Dendritic cell treated with granulocyte-macrophage colony-stimulating factor and Interleukin-4, amounts not matched to agents 40 ng/mL and 50 ng/mL, for 4 days (primary cell): ENCODE measurements at regions of chr9 and their contacts with region 1.

Region 1: GRCh38 chr9:70413798-70414775 is at the start of gene KLF9:
- H3K4me3 Mint-ChIP-seq: peak within 1 kb of the TSS; percentile 97
- H3K27ac Mint-ChIP-seq: peak within 1 kb of the TSS; percentile 100
- H3K4me1 Mint-ChIP-seq: peaks cover 39% of the 10 kb centered on the region
- H3K27me3 Mint-ChIP-seq: no peaks in the 10 kb centered on the region

Region 2: GRCh38 chr9:70258692-70259511 is 155.2 kb before region 1 on chr9 and contains the start of gene SMC5:
- intact Hi-C with region 1: loop called (anchors 5 kb)
- H3K4me3 Mint-ChIP-seq: peak within 1 kb of the TSS; percentile 85
- H3K27ac Mint-ChIP-seq: peak within 1 kb of the TSS; percentile 95
- H3K4me1 Mint-ChIP-seq: peaks cover 51% of the 10 kb centered on the region
- H3K27me3 Mint-ChIP-seq: no peaks in the 10 kb centered on the region

Region 3: GRCh38 chr9:70374962-70375618 is 39.0 kb before region 1 on chr9:
- intact Hi-C with region 1: no loop called
- H3K4me3 Mint-ChIP-seq: no peak overlapping the region
- H3K27ac Mint-ChIP-seq: peak overlapping the region; percentile 57
- H3K4me1 Mint-ChIP-seq: peaks cover 8% of the 10 kb centered on the region
- H3K27me3 Mint-ChIP-seq: peaks cover under 1% of the 10 kb centered on the region

Region 4: DNA sequence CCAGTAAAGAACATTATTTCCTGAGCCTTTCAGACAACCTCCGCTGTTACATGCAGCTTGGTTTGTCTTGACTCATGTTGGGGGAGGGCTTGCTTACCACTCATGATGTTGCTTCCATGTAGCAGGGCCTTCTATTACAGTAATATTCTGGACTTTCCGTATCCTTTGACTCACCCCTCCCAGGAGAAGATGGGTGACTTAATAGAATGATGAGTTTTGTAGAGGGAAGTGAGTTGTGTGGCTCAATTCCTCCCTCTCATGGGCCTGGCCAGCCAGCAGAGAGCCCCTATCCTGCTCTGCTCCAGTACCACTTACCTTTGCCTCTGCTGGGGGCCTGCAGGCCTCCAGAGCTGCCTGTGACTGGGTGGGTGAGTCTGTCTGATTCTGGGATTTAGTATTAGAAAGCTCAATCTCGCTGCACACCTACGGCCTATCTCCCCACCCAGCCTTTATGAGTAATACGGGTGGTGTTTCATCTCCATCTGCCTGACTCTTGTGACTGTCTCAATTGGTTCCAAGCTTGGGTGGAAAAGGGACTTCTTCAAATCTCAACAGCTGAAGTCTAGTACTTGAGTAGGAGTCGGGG is 53.0 kb after region 1 on chr9:
- intact Hi-C with region 1: loop called (anchors 10 kb)
- H3K4me3 Mint-ChIP-seq: no peak overlapping the region
- H3K27ac Mint-ChIP-seq: peak overlapping the region; percentile 82
- H3K4me1 Mint-ChIP-seq: peaks cover 60% of the 10 kb centered on the region
- H3K27me3 Mint-ChIP-seq: no peaks in the 10 kb centered on the region

Region 5: DNA sequence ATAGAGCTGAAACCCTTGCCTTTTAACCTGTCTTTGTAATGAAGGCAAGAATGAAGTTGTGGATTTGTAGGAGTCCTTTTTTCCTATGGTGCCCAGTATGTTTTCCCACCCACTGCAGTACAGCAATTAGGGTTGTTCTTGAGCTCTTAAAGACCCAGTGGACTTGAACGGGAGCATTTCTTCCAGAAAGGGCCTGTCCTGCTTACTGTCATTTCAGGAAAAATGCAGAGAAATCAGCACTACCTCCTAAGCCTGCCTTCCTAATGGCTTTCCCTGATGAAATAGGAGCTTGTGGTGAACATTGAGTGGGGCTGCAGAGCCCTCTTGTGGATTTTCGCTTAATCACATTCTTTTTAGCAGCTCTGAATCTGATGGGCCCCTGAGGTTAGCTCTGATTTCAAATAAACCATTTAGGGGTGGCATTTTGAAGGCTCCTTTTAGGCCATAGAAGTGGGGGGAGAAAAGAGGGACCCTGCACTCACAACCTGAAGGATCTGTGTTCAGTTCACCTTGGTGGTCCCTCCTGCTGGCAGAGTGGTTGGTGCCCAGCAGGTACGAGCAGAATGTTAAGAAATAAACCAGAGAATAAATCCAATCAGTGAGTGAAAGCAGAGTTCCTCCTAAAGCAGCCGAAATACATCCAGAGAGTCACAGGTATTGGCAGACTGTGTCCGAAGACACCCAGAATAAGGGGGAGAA is 188.4 kb after region 1 on chr9:
- intact Hi-C with region 1: loop called (anchors 5 kb)
- H3K4me3 Mint-ChIP-seq: no peak overlapping the region
- H3K27ac Mint-ChIP-seq: no peak overlapping the region
- H3K4me1 Mint-ChIP-seq: peaks cover 21% of the 10 kb centered on the region
- H3K27me3 Mint-ChIP-seq: no peaks in the 10 kb centered on the region

Region 6: DNA sequence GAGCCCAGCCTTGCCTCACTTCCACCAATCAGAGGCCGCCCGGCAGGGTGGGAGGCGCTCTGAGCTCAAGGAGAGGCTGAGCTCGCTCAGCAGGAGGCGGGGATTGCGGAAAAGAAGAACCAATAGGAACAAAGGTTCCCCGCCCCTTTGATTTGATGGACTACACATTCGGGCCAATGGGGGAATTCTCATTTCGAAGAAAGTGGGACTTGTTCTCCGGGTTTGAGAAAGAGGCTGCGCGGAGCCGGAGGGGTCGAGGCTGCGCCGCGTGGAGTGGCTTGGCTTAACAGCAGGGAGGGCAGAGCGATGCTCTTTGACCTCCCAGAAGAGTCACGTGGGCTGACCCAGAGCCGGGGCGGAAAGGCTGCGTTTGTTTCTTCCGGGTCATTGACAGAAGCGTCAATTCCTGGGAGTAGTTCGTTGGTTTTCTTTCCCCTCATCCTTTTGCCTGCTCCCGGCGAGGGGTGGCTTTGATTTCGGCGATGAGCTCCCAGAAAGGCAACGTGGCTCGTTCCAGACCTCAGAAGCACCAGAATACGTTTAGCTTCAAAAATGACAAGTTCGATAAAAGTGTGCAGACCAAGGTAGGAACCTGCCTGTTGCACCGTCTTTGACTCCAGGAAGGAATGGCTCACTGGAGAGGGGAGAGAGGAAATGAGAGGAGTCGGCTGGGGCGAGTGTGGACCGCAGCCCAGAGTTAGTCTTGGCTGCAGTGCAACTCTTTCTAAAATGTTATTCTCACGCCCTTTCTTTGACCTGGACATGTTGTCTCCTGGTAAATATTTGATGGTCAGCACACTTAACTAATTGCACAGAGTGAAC is 1497.4 kb after region 1 on chr9 and contains the start of gene C9orf85:
- intact Hi-C with region 1: loop called (anchors 10 kb)
- H3K4me3 Mint-ChIP-seq: peak within 1 kb of the TSS; percentile 90
- H3K27ac Mint-ChIP-seq: peak within 1 kb of the TSS; percentile 95
- H3K4me1 Mint-ChIP-seq: peaks cover 44% of the 10 kb centered on the region
- H3K27me3 Mint-ChIP-seq: no peaks in the 10 kb centered on the region